ENCODE measurements at regions of chr5 and their contacts with region 1.

Region 1: DNA sequence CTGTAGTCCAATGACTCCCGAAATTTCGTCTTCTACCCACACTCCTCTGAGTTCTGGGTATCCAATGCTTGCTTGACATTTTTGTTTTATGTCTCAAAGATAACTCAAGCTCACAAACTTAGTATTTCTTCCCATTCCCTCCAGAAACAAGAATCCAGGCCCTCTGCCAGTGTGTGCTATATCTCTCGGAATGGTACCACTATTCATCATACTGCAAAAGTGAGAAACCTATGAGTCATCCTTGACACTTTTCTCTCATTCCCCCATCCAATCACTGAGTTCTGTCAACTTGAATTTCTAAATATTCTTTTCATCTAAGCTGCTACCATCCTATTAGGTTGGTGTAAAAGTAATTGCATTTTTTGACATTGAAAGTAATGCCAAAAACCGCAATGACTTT is 9.8 kb downstream of the SLC12A2 start:
- DNase-seq: no peak
- ATAC-seq: no peak
- H3K4me3 Mint-ChIP-seq: no peak overlapping the region
- H3K27ac Mint-ChIP-seq: no peak overlapping the region
- H3K4me1 Mint-ChIP-seq: peaks cover 25% of the 10 kb centered on the region
- H3K27me3 Mint-ChIP-seq: no peaks in the 10 kb centered on the region
- CTCF ChIP-seq: no peak

Region 2: DNA sequence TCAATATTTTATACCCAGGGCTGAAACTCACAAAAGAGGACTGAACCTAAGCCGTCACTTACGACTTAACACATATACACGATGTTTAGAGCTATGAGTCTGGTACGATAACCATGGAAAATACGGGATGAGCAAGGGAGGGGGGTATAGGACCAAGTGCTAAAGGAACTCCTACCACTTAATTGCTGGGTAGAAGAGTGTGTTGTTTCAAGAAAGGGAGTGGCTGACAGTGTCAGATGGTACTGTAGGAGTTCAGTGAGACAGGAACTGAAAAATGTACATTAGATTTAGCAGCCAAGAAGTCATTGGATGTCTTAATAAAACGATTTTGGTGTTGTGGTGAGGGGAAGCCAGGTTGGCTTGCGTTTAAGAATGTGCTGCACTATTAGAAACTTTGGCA is 11.8 kb after region 1 on chr5:
- CTCF ChIA-PET with region 1: no interaction called
- POLR2A ChIA-PET with region 1: no interaction called
- intact Hi-C with region 1: loop called (anchors 1 kb)
- DNase-seq: no peak
- ATAC-seq: no peak
- H3K4me3 Mint-ChIP-seq: no peak overlapping the region
- H3K27ac Mint-ChIP-seq: no peak overlapping the region
- H3K4me1 Mint-ChIP-seq: peaks cover 17% of the 10 kb centered on the region
- H3K27me3 Mint-ChIP-seq: no peaks in the 10 kb centered on the region
- CTCF ChIP-seq: no peak

Region 3: DNA sequence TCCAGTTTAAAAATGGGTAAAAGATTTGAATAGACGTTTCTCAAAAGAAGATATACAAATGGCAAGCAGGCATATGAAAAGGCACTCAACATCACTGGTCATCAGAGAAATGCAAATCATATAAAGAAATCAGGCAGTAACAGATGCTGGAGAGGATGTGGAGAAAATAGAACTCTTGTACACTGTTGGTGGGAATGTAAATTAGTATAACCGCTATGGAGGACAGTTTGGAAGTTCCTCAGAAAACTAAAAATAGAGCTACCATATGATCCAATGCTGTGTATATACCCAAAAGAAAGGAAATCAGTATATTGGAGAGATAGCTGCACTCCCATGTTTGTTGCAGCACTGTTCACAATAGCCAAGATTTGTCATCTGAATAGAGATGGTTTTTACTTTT is 32.9 kb after region 1 on chr5:
- CTCF ChIA-PET with region 1: no interaction called
- POLR2A ChIA-PET with region 1: no interaction called
- intact Hi-C with region 1: loop called (anchors 5 kb)
- DNase-seq: no peak
- ATAC-seq: no peak
- H3K4me3 Mint-ChIP-seq: no peak overlapping the region
- H3K27ac Mint-ChIP-seq: no peak overlapping the region
- H3K4me1 Mint-ChIP-seq: peaks cover 4% of the 10 kb centered on the region
- H3K27me3 Mint-ChIP-seq: no peaks in the 10 kb centered on the region
- CTCF ChIP-seq: no peak